AG04449 (cell line): ENCODE measurements at regions of chr3 and their contacts with region 1.

Region 1: GRCh38 chr3:158727206-158728060 is 4.8 kb downstream of the RARRES1 start:
- DNase-seq: no peak
- H3K4me3 ChIP-seq: no peak overlapping the region
- CTCF ChIP-seq: peak; percentile 56

Region 2: DNA sequence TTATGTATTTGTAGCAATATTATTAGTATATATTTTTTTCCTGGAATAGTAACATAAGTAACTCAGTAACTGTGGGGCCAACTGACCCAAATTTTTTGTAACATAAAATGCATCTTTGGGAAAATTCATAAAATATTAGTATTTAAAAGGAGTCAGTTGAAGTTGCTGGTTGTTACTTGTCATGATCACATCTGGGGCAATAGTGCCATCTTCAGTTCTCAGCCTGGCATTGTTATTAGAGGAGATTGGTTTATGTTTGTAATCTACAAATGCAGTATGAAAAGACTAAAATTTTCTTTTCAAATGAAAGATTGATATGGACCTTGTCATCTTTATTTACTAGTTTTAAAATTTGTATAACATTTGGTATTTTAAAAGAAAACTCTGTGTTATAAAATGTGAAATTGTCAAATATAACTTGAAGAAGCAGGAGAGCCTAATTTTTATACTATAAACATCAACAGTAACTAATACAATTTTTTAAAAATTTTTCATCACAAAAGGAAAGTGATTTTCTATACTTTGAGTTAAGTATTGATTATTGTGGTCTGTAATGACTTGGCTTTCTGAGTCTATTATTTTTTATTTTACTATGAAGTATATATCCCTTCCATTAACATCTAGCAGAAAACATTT is 195.2 kb before region 1 on chr3:
- CTCF ChIA-PET with region 1: no interaction called
- POLR2A ChIA-PET with region 1: no interaction called
- DNase-seq: no peak
- H3K4me3 ChIP-seq: no peak overlapping the region
- CTCF ChIP-seq: peak; percentile 55

Region 3: DNA sequence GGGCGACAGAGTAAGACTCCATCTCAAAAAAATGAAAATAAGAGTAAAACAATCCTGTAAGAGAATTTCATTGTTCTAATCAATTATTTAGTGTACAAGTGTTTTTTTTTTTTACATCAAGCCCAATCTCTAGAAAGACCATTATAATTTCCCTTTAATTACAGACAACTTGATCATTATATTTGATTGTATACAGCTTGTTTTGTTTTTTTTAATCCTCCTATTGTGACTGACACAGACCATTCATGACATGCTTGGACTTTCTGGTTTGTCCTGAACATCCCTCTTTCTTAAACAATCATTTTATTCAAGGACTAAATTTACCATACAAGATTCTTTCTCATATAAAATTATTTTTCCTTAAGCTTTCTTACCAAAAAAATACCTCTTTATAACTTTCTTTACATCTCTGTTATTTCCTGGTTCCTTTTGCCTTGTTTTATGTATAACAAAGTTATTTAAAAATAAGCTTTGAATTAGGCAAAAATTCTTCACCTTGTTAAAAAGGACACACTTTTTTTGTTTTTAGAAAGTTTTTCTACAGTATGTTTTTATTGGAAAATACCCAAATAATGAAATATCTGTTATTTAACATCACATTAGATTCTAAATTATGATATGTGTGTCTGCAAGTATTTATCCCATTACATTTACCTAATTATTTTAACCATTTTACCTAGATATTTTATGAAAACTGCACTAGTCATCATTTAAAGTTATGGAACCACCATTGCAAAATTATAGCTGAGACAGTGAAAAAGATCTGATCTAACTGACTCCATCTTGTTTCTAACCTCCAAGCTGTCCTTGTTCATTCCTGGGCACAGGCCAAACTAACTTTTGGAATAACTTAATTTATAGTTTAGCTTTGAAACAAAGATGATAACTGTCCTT is 109.2 kb before region 1 on chr3:
- CTCF ChIA-PET with region 1: no interaction called
- POLR2A ChIA-PET with region 1: no interaction called
- DNase-seq: no peak
- H3K4me3 ChIP-seq: no peak overlapping the region
- CTCF ChIP-seq: no peak

Region 4: GRCh38 chr3:158644345-158644908 is 83.0 kb before region 1 on chr3 and contains the start of gene GFM1:
- CTCF ChIA-PET with region 1: interaction called, 14 read pairs
- POLR2A ChIA-PET with region 1: no interaction called
- DNase-seq: peak; percentile 75
- H3K4me3 ChIP-seq: peak within 1 kb of the TSS; percentile 95
- CTCF ChIP-seq: peak; percentile 94

Region 5: DNA sequence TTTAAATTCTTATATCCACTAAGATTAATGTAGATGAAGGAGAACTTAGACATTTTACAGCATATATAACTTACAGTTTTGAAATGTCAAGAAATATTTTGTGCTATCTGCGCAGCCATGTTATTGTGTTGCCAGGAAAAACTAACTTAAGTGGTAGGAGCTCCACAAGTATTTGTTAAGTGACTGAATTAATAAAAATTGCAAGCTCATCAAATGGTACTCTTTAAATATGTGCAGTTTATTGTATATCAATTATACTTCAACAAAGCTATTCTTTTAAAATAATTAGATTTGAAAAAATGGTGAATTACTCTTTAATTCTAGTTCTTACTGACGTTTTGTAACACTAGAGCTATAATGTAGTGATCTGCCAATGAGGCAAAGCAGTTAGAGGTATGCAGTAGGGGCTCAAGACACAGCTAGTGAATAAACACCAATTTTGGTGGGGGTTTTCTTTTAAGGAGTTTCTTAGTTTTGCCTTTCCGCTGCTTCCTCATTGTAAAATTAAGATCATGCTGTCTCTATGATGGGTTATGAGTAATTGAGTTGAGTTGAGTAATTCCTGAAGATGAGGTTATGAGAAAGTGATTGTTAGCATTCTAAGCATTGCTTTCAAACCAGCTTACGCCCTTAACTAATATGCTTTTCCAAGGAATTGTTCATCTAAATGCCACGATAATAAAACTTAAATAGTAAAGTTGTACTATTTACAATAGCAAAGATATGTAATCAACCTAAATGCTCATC is 44.0 kb before region 1 on chr3:
- CTCF ChIA-PET with region 1: interaction called, 11 read pairs
- POLR2A ChIA-PET with region 1: no interaction called
- DNase-seq: peak; percentile 76
- H3K4me3 ChIP-seq: no peak overlapping the region
- CTCF ChIP-seq: no peak

Region 6: GRCh38 chr3:158713094-158713499 is 14.3 kb before region 1 on chr3:
- CTCF ChIA-PET with region 1: interaction called, 78 read pairs
- POLR2A ChIA-PET with region 1: interaction called, 6 read pairs
- DNase-seq: no peak
- H3K4me3 ChIP-seq: no peak overlapping the region
- CTCF ChIP-seq: no peak

Region 7: GRCh38 chr3:158768361-158768787 is 40.9 kb after region 1 on chr3:
- CTCF ChIA-PET with region 1: interaction called, 65 read pairs
- POLR2A ChIA-PET with region 1: no interaction called
- DNase-seq: no peak
- H3K4me3 ChIP-seq: no peak overlapping the region
- CTCF ChIP-seq: no peak

Region 8: DNA sequence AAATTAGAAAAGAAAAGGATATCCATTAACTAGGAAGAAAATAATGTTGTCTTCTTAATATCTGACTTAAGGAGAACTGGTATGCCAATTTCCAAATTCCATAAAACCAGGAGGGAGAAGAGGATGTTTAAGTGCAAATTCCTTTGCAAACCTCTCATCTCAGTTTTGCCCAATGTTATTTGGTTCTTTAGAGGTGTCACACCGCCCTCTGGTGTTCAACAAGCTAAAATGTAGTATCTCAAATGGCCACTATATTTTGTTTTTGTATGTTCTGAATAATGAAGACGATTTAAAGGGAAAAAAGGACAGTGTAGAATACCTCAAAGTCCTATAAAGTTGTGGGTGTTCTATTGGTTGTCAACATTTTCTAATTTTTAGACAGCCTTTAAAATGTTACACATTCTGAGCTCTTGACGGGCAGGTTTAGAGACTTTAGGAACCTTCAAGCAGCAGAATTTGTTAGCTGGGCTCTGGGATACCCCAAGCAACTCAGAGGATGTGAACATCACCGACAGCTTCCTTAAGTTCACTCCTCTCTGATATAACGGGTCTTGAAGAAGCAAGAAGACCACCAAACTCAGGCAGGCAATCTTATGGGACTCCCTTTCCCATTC is 532.7 kb after region 1 on chr3:
- CTCF ChIA-PET with region 1: interaction called, 18 read pairs
- POLR2A ChIA-PET with region 1: no interaction called
- DNase-seq: peak; percentile 69
- H3K4me3 ChIP-seq: no peak overlapping the region
- CTCF ChIP-seq: peak; percentile 54